SK-N-SH (cell line): ENCODE measurements at regions of chr2 and their contacts with region 1.

Region 1: DNA sequence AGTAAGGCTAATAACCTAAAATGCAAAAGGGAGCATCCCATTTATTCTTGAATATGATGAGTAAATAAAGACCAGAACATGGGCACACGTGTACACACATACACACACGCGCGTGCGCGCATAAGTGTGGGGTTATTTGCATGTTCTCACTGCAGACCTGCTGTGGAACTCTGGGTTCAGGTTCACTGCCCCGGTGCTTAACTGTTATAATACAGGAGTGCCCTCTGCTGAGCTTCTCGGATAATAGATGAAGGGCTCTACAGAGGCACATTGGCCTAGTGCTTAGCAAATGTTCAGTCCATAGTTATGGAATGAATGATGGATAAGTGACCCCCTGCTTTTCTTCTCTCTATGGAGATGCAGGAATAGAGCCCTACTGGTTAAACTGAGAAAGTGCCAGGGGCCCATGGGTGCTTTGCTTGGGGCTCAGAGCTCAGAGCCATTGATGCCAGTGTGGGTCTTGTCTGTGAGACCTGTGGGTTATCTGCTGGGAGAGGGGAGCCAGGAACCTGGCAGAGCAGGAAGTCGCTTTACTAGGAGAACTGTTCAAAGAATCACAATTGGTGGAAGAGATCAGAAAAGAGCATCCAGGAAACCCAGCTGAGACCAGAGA is 3.6 kb upstream of the ARL4C start:
- DNase-seq: peak; percentile 61
- H3K4me3 ChIP-seq: no peak overlapping the region
- H3K27ac ChIP-seq: no peak overlapping the region
- H3K4me1 ChIP-seq: peaks cover 6 to 8% of the 10 kb centered on the region in 2 experiments; a peak in 2 of 4 replicates
- H3K27me3 ChIP-seq: no peaks in the 10 kb centered on the region
- CTCF ChIP-seq: peak; percentile 64
- EP300 ChIP-seq: no peak
- RAD21 ChIP-seq: peak; percentile 93

Region 2: GRCh38 chr2:234335661-234336228 is 164.8 kb before region 1 on chr2:
- CTCF ChIA-PET with region 1: interaction called, 6 read pairs
- POLR2A ChIA-PET with region 1: interaction called, 11 read pairs
- DNase-seq: peak; percentile 83
- H3K4me3 ChIP-seq: no peak overlapping the region
- H3K27ac ChIP-seq: peak overlapping the region; percentile 41 to 98; a peak in 3 of 4 replicates
- H3K4me1 ChIP-seq: peaks cover 0 to 44% of the 10 kb centered on the region in 2 experiments; a peak in 2 of 4 replicates
- H3K27me3 ChIP-seq: no peaks in the 10 kb centered on the region
- CTCF ChIP-seq: no peak
- EP300 ChIP-seq: peak; percentile 70 to 98; a peak in 3 of 4 replicates
- RAD21 ChIP-seq: peak; percentile 38; the same call in 1 of the 2 replicates

Region 3: DNA sequence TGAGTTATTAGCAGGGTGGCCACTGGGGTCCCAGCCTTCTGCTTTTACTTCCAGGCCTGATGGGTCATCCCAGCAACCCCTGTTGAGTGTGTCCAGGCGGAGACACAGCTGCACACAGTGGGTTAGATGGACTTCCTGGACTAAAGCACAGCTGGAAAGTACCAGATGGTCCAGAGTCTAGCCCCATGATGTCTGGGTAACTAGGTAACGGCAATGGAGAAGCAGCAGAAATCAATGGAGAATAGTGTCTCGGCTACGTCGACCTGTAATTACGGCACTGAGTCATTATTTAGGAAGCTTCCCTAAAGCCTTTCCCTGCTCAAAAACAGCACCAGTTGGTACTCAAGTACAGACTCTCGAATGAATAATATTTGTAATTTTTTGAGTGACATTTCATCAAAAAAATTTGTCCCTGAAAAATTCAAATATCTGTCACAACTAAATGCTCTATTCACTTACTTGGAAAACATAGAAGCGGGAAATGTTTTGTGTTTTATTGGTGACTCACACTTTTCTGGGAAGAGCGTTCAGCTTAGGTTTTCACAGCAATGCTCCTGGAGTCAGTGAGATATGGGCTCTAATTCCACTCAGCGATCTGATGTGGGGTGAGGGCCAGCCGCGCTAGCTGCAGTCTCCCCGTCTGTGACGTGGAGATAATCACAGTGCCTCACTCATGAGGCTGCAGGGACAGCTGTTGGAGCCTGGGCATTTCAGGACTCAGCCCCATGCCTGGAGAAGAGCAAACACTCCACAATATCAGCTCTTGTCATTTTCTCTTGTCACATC is 12.6 kb after region 1 on chr2:
- CTCF ChIA-PET with region 1: interaction called, 11 read pairs
- POLR2A ChIA-PET with region 1: interaction called, 3 read pairs
- DNase-seq: peak; percentile 64
- H3K4me3 ChIP-seq: no peak overlapping the region
- H3K27ac ChIP-seq: peak overlapping the region in 1 of 2 experiments; percentile 41; a peak in 2 of 4 replicates
- H3K4me1 ChIP-seq: peaks cover 0 to 6% of the 10 kb centered on the region in 2 experiments; a peak in 1 of 4 replicates
- H3K27me3 ChIP-seq: no peaks in the 10 kb centered on the region
- CTCF ChIP-seq: no peak
- EP300 ChIP-seq: no peak
- RAD21 ChIP-seq: no peak

Region 4: GRCh38 chr2:234745347-234745746 is 244.8 kb after region 1 on chr2:
- CTCF ChIA-PET with region 1: no interaction called
- POLR2A ChIA-PET with region 1: no interaction called
- DNase-seq: no peak
- H3K4me3 ChIP-seq: no peak overlapping the region
- H3K27ac ChIP-seq: no peak overlapping the region
- H3K4me1 ChIP-seq: no peaks in the 10 kb centered on the region
- H3K27me3 ChIP-seq: no peaks in the 10 kb centered on the region
- CTCF ChIP-seq: no peak; the same call in 1 of the 2 replicates
- EP300 ChIP-seq: no peak
- RAD21 ChIP-seq: no peak